ENCODE measurements at regions of chr5 and their contacts with region 1.

Region 1: GRCh38 chr5:178859625-178860531 is at the start of gene ZNF354B:
- DNase-seq: peak; percentile 88 to 92
- ATAC-seq: peak; percentile 97 to 99 (median 98)
- H3K4me3 ChIP-seq: peak within 1 kb of the TSS; percentile 48 to 96 (median 84)
- H3K27ac ChIP-seq: peak within 1 kb of the TSS; percentile 56 to 91 (median 89)
- H3K4me1 ChIP-seq: peaks cover 0 to 29% (median 18%) of the 10 kb centered on the region in 9 donors
- H3K27me3 ChIP-seq: no peaks in the 10 kb centered on the region
- CTCF ChIP-seq: peak in 5 of 9 donors; percentile 6 to 42 (median 26)
- total RNA-seq, gene ZNF354B: 5.5 to 10.9 (median 7.4) TPM

Region 2: DNA sequence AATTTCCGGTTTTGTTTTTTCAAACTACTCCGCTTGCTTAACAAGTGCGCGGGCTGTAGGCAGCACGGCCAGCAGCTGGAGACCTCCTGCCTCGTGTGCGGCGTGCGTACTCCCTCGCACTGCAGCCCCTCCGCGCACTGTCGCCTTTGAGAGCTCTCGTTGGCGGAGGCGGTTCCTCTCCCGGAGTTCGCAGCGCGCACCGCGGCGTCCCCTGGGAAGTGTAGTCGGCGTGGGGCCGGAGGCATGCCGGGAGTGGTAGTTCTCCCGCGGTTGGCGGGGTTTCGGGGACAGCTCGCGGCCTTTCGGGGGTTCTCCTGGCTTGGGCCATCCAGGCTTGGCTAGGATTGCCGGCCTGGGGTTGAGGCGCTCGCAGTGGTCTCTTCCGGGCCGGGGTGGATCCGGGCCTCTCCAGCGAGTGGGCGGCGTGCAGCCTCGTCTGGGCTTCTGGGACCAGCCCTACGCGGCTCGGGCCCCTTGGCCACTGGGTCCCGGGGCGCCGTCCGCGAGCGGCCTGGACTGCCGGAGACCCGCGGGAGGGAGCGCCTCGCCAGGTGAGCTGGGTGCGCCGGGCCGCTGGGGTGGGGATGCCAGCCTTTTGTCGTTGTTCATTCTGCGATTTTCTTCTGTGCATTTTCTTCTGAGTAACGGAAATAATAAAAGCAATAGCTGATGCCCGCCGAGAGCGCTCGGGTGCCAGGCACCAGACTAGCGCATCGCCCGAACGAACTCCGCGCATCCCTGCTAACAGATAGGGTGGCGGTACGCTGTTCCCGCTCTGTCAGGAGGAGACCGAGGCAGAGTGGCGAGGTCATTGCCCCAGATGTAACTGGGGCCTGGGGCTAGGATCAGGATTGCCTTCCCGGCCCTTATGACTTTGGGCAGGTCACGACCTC is 200.5 kb after region 1 on chr5 and contains the start of gene ZNF354C:
- intact Hi-C with region 1: loop called in 2 of 10 experiments (anchors 2 kb)
- DNase-seq: peak; percentile 91 to 93
- ATAC-seq: peak; percentile 98 to 100 (median 99)
- H3K4me3 ChIP-seq: peak within 1 kb of the TSS; percentile 60 to 85 (median 80)
- H3K27ac ChIP-seq: peak within 1 kb of the TSS; percentile 31 to 89 (median 80)
- H3K4me1 ChIP-seq: peaks cover 5 to 20% (median 11%) of the 10 kb centered on the region in 9 donors
- H3K27me3 ChIP-seq: no peaks in the 10 kb centered on the region
- CTCF ChIP-seq: peak in 2 of 9 donors; percentile 10 to 12
- total RNA-seq, gene ZNF354C: 3.5 to 5.5 (median 4.2) TPM

Region 3: DNA sequence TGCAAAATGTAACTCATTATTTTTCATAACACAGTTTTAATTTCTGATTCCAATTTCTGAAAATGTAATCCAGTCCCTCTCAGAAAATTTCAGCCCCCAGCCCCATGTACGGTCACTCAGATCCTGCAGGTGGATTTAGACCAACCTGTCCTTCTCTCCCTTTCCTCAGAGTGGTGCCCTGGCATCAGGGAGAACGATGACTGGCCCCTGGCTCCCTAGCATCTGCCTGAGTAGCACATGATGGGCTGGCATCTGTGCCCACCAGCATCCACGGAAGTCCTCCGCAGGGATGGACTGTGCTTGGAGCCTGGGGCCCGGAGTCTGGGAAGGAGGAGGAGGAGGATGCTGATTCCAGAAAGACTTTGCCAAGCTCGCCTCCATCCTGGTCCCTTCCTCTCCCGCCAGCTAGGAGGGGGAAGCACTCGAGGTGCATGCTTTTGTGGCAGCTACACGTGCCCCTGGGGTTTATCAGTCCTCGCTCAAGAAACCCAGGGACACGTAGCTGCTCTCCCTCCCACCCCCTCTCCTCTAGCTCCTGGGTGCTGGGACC is 636.1 kb after region 1 on chr5:
- intact Hi-C with region 1: loop called in 1 of 10 experiments (anchors 5 kb)
- DNase-seq: no peak
- ATAC-seq: no peak
- H3K4me3 ChIP-seq: no peak overlapping the region
- H3K27ac ChIP-seq: no peak overlapping the region
- H3K4me1 ChIP-seq: no peaks in the 10 kb centered on the region
- H3K27me3 ChIP-seq: peaks cover 0 to 34% (median 9%) of the 10 kb centered on the region in 7 donors
- CTCF ChIP-seq: no peak

Measured in heart right ventricle (tissue), 16 donors.